CD4-positive, alpha-beta memory T cell (primary cell): ENCODE measurements at regions of chr9 and their contacts with region 1.

Region 1: GRCh38 chr9:92954049-92954861 is 6.9 kb downstream of the FGD3 start:
- DNase-seq: peak; percentile 87 to 95 (median 90)
- H3K4me3 ChIP-seq: peak overlapping the region; percentile 49 to 57
- H3K4me3 Mint-ChIP-seq: peak overlapping the region; percentile 86 to 92 (median 88)
- H3K27ac ChIP-seq: peak overlapping the region; percentile 75
- H3K27ac Mint-ChIP-seq: peak overlapping the region; percentile 89 to 100 (median 99)
- H3K4me1 ChIP-seq: peaks cover 91% of the 10 kb centered on the region
- H3K4me1 Mint-ChIP-seq: peaks cover 65 to 91% (median 78%) of the 10 kb centered on the region in 4 donors
- H3K27me3 ChIP-seq: no peaks in the 10 kb centered on the region
- H3K27me3 Mint-ChIP-seq: no peaks in the 10 kb centered on the region

Region 2: DNA sequence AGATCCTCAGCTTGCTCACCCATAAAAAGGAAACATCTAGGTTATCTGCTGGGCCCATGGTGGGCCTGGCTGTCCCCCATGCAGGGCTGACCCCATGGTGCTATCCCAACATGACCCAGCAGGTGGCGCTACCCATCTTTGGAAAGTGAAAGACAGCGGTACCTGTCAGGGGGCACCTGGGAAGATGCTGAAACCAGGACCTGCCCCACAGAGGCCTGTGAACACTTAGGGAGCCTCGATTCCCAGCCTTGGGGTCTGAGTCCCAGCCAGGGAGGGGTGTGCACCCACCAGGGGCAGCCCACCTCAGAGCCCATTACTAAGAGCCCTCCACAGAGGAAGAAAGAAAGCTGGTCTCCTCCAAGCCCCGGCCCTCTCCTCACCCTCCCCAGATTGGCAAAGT is 237.7 kb before region 1 on chr9:
- CTCF ChIA-PET with region 1: interaction called, 3 read pairs
- POLR2A ChIA-PET with region 1: no interaction called
- intact Hi-C with region 1: loop called (anchors 2 kb)
- DNase-seq: peak; percentile 60 to 76 (median 72)
- H3K4me3 ChIP-seq: no peak overlapping the region
- H3K4me3 Mint-ChIP-seq: no peak overlapping the region
- H3K27ac ChIP-seq: no peak overlapping the region
- H3K27ac Mint-ChIP-seq: peak overlapping the region; percentile 15 to 74 (median 48)
- H3K4me1 ChIP-seq: peaks cover 19% of the 10 kb centered on the region
- H3K4me1 Mint-ChIP-seq: peaks cover 15 to 29% (median 17%) of the 10 kb centered on the region in 4 donors
- H3K27me3 ChIP-seq: no peaks in the 10 kb centered on the region
- H3K27me3 Mint-ChIP-seq: no peaks in the 10 kb centered on the region

Region 3: DNA sequence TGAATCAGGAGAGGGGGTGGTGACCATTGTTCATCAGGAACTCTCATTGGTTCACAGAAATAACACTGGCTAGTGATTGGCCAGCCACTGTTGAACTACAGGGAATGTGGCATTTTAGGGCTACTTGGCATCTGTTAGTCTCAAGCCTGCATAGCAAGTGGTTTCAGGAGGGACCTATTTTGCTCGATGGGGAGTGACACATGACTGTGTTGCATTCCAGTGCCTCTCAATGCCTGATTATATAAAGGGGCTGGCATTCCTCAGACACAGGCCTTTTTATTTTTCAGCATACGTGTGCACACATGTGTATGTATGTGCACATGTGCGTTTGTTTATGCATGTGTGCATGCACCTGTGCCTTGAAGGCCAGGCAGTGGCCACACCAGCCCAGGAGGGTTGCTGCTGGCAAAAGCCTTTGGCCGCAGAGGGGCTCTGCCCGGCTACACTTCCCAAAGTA is 16.2 kb after region 1 on chr9:
- CTCF ChIA-PET with region 1: interaction called, 15 read pairs
- POLR2A ChIA-PET with region 1: interaction called, 304 read pairs
- intact Hi-C with region 1: no loop called
- DNase-seq: no peak
- H3K4me3 ChIP-seq: peak overlapping the region; percentile 19 to 54
- H3K4me3 Mint-ChIP-seq: peak overlapping the region; percentile 75 to 99 (median 94)
- H3K27ac ChIP-seq: peak overlapping the region; percentile 84
- H3K27ac Mint-ChIP-seq: peak overlapping the region; percentile 88 to 100 (median 98)
- H3K4me1 ChIP-seq: peaks cover 97% of the 10 kb centered on the region
- H3K4me1 Mint-ChIP-seq: peaks cover 54 to 98% (median 76%) of the 10 kb centered on the region in 4 donors
- H3K27me3 ChIP-seq: no peaks in the 10 kb centered on the region
- H3K27me3 Mint-ChIP-seq: no peaks in the 10 kb centered on the region

Region 4: DNA sequence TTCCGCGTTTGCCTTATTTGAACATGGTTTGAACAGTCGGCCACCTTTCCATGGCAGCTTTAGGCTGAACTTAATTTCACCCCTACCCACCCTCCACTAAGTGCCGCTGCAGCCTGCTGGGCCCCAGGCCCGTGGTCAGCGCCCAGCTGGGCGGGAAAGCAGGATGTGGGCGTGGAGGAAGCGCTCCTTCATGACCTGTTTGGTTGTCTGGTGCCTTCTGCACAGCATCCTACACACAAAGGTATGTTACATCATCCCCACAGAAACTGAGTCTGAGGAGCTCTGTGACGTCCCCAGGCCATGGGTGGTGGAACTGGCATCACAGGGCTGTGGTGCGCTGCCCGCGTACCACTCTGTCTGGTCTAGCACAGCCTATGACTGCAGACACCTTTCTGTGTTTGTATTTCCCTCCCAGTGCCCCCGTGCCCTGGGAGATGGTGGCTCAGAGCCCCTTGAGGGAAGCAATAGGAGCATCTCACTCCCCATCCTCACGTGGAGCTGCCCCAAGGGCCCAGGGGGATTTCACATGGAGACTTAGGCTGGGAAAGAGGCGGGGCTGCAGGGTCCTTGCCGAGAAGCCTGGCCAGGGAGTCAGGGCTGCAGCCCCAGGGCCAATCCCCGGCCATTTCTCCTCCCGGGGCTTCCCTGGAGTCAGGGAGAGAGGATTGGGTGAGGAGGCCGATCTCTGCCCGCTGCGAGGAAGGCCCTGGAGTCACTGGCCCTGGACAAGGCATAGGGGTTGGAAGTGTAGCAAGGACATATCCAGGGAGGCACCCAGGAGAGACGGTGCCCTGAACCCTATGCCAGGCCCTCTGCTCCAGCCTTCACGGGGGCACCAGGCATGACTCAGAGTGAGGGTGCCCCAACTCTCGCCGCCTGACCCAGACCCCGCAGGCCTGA is 66.8 kb after region 1 on chr9:
- CTCF ChIA-PET with region 1: interaction called, 16 read pairs
- POLR2A ChIA-PET with region 1: interaction called, 9 read pairs
- intact Hi-C with region 1: no loop called
- DNase-seq: peak; percentile 36 to 83 (median 56)
- H3K4me3 ChIP-seq: no peak overlapping the region
- H3K4me3 Mint-ChIP-seq: peak overlapping the region in 2 of 8 donors; percentile 21 to 59
- H3K27ac ChIP-seq: peak overlapping the region; percentile 41
- H3K27ac Mint-ChIP-seq: peak overlapping the region; percentile 88 to 99 (median 93)
- H3K4me1 ChIP-seq: peaks cover 54% of the 10 kb centered on the region
- H3K4me1 Mint-ChIP-seq: peaks cover 30 to 84% (median 61%) of the 10 kb centered on the region in 4 donors
- H3K27me3 ChIP-seq: no peaks in the 10 kb centered on the region
- H3K27me3 Mint-ChIP-seq: no peaks in the 10 kb centered on the region

Region 5: DNA sequence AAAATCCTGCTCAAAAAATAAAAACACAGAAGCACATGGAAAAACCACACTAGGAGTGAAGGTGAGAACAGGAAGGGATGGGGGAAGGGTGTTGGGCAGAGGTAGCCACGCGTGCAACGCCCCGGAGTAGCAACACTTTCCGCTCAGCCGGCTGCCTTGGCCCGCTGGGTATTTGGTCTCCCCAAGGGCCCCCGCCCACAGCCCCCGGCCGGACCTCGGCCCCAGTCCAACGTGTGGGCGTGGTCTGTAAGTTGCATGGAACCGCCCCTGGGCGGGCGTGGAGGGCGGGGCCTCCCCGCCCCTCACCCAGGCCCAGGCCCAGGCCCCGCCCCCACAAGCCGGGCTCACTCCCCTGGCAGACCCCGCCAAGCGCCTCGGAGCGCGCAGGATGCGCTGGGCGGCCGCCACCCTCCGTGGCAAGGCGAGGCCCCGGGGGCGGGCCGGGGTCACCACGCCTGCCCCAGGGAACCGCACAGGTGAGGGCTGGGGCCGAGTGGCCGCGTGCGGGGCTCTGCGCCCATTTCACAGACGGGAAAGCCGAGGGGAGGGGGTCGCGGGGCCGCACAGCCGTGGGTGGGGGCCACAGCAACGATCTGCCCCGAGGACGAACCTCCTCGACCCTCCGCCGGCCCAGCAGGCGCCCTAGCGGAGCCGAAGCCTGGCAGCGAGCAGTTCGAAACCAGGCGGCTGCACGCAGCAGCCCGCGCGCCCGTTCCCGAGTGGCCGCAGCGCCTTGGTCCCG is 104.3 kb after region 1 on chr9 and contains the start of gene SUSD3:
- CTCF ChIA-PET with region 1: interaction called, 7 read pairs
- POLR2A ChIA-PET with region 1: interaction called, 21 read pairs
- intact Hi-C with region 1: no loop called
- DNase-seq: peak; percentile 58 to 76 (median 63)
- H3K4me3 ChIP-seq: peak within 1 kb of the TSS; percentile 86 to 92
- H3K4me3 Mint-ChIP-seq: peak within 1 kb of the TSS; percentile 94 to 95 (median 95)
- H3K27ac ChIP-seq: peak within 1 kb of the TSS; percentile 72
- H3K27ac Mint-ChIP-seq: peak within 1 kb of the TSS; percentile 96 to 100 (median 99)
- H3K4me1 ChIP-seq: peaks cover 76% of the 10 kb centered on the region
- H3K4me1 Mint-ChIP-seq: peaks cover 30 to 82% (median 58%) of the 10 kb centered on the region in 4 donors
- H3K27me3 ChIP-seq: no peaks in the 10 kb centered on the region
- H3K27me3 Mint-ChIP-seq: no peaks in the 10 kb centered on the region
- total RNA-seq, gene SUSD3: 58.3 to 63.7 TPM

Region 6: GRCh38 chr9:93108291-93109041 is 154.2 kb after region 1 on chr9:
- CTCF ChIA-PET with region 1: interaction called, 19 read pairs
- POLR2A ChIA-PET with region 1: interaction called, 6 read pairs
- intact Hi-C with region 1: no loop called
- DNase-seq: peak in 1 of 5 donors; percentile 44
- H3K4me3 ChIP-seq: no peak overlapping the region
- H3K4me3 Mint-ChIP-seq: peak overlapping the region in 2 of 8 donors; percentile 22 to 63
- H3K27ac ChIP-seq: peak overlapping the region; percentile 6
- H3K27ac Mint-ChIP-seq: peak overlapping the region in 4 of 7 donors; percentile 12 to 84 (median 70)
- H3K4me1 ChIP-seq: peaks cover 52% of the 10 kb centered on the region
- H3K4me1 Mint-ChIP-seq: peaks cover 26 to 60% (median 46%) of the 10 kb centered on the region in 4 donors
- H3K27me3 ChIP-seq: no peaks in the 10 kb centered on the region
- H3K27me3 Mint-ChIP-seq: no peaks in the 10 kb centered on the region

Region 7: DNA sequence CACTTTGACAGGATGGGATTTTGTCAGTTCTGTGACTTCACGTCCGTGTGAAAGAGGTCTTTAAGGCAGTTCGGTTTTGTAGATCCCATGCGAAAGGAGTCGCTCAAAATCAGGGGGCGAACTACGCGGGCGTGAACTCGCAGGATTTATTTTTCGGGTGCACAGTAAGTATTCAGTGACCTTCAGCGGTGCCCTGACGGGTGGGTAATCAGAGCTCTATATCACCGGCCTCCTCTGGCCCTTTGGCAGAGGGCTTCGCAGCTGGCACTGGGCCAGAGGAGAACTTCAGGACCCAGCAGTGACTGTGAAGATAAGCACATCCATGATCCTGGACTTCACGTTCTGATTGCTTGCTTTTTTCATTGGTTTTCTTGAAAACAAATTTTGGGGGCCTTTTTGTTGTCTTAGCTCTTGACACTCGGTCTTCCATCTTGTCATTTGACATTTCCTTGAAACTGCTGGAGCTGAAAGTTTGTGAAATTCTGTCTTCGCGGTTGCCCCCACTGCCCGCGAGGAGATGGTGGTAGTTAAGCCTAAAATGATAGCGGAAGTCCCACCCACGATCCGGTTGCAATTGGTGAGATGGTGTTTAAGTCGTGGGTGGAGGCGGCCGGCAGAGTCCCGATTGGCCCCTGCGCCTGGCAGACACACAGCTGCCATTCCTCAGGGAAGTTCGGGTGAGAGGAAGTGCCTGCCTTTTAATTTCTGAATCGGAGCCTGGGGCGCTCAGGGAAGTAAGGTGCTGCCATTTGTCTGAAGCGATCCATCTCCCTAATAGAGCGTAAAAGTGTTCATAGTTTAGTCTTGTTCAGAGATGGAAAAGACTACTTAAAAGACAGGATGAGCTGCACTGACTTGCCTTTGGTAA is 499.0 kb after region 1 on chr9 and contains the start of gene FAM120AOS:
- CTCF ChIA-PET with region 1: interaction called, 3 read pairs
- POLR2A ChIA-PET with region 1: interaction called, 6 read pairs
- intact Hi-C with region 1: loop called (anchors 2 kb)
- DNase-seq: peak; percentile 79 to 91 (median 80)
- H3K4me3 ChIP-seq: peak within 1 kb of the TSS; percentile 69 to 83
- H3K4me3 Mint-ChIP-seq: peak within 1 kb of the TSS; percentile 93 to 98 (median 96)
- H3K27ac ChIP-seq: peak within 1 kb of the TSS; percentile 69
- H3K27ac Mint-ChIP-seq: peak within 1 kb of the TSS; percentile 88 to 99 (median 97)
- H3K4me1 ChIP-seq: peaks cover 62% of the 10 kb centered on the region
- H3K4me1 Mint-ChIP-seq: peaks cover 36 to 63% (median 51%) of the 10 kb centered on the region in 4 donors
- H3K27me3 ChIP-seq: no peaks in the 10 kb centered on the region
- H3K27me3 Mint-ChIP-seq: no peaks in the 10 kb centered on the region
- total RNA-seq, gene FAM120AOS: 49.7 to 50.8 TPM